ENCODE measurements at regions of chr11 and their contacts with region 1.

Region 1: DNA sequence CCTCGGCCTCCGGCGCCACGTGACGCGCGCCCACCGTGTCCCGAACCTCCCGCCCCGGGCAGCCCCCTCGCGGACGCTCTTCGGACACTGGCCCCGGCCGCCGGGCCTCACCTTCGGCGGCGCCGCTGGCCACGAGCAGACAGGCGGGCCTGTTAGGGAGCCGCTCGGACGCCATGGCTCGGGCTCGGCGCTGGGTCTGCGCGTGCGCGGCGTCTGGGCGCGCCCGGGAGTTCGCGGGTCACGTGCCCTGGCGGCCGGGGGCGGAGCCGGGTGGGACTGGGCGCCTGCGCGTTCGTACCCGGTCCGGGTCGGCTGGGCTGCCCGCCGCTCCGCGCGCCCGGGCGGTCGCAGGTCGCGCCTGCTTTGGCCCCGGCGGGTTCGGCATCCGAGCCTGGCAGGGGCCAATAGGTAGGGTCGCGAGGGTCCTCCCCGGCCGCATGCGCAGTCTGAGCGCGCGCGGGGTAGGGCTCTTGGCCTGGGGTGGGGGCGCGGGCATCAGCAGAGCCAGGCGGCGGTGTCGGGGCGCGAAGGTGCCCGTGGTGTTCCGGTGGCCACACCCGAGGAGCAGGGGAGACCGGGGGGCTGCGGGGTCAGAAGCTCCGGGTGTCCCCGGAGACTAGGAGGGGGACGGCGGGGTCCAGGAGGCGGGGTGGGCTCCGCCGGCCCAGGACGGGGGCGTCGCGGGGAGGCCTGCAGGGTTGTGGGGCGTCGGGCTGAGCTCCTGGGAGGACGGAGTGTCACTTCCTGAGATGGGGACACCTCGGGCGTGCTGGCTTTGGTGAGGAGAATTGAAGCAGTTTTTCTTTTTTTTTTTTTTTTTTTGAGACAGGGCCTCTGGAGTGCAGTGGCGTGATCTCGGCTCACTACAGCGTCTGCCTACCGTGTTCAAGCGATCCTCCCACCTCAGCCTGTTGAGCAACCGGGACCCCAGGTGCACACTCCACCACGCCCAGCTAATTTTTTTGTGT is at the start of gene GATD1:
- DNase-seq: peak; percentile 97
- ATAC-seq: peak; percentile 91
- H3K4me3 Mint-ChIP-seq: peak within 1 kb of the TSS; percentile 89
- H3K27ac Mint-ChIP-seq: peak within 1 kb of the TSS; percentile 82
- H3K4me1 Mint-ChIP-seq: peaks cover 20% of the 10 kb centered on the region
- H3K27me3 Mint-ChIP-seq: no peaks in the 10 kb centered on the region
- total RNA-seq, gene GATD1: 45.7 to 59.8 TPM

Region 2: GRCh38 chr11:747158-748006 is 30.2 kb before region 1 on chr11 and contains the start of gene TALDO1:
- CTCF ChIA-PET with region 1: interaction called, 3 read pairs
- POLR2A ChIA-PET with region 1: interaction called, 4 read pairs
- intact Hi-C with region 1: loop called in 1 of 2 experiments (anchors 1 kb)
- DNase-seq: peak; percentile 92
- ATAC-seq: peak; percentile 91
- H3K4me3 Mint-ChIP-seq: peak within 1 kb of the TSS; percentile 82
- H3K27ac Mint-ChIP-seq: peak within 1 kb of the TSS; percentile 72
- H3K4me1 Mint-ChIP-seq: peaks cover 20% of the 10 kb centered on the region
- H3K27me3 Mint-ChIP-seq: no peaks in the 10 kb centered on the region
- total RNA-seq, gene TALDO1: 239 to 246 TPM

Region 3: GRCh38 chr11:789943-790342 is 12.4 kb after region 1 on chr11 and contains the start of gene CEND1:
- CTCF ChIA-PET with region 1: interaction called, 3 read pairs
- POLR2A ChIA-PET with region 1: no interaction called
- intact Hi-C with region 1: loop called in 1 of 2 experiments (anchors 1 kb)
- DNase-seq: peak; percentile 76
- ATAC-seq: peak; percentile 64
- H3K4me3 Mint-ChIP-seq: peak within 1 kb of the TSS; percentile 28
- H3K27ac Mint-ChIP-seq: no peak within 1 kb of the TSS
- H3K4me1 Mint-ChIP-seq: peaks cover 6% of the 10 kb centered on the region
- H3K27me3 Mint-ChIP-seq: no peaks in the 10 kb centered on the region
- total RNA-seq, gene CEND1: 0.50 to 1.1 TPM

Region 4: DNA sequence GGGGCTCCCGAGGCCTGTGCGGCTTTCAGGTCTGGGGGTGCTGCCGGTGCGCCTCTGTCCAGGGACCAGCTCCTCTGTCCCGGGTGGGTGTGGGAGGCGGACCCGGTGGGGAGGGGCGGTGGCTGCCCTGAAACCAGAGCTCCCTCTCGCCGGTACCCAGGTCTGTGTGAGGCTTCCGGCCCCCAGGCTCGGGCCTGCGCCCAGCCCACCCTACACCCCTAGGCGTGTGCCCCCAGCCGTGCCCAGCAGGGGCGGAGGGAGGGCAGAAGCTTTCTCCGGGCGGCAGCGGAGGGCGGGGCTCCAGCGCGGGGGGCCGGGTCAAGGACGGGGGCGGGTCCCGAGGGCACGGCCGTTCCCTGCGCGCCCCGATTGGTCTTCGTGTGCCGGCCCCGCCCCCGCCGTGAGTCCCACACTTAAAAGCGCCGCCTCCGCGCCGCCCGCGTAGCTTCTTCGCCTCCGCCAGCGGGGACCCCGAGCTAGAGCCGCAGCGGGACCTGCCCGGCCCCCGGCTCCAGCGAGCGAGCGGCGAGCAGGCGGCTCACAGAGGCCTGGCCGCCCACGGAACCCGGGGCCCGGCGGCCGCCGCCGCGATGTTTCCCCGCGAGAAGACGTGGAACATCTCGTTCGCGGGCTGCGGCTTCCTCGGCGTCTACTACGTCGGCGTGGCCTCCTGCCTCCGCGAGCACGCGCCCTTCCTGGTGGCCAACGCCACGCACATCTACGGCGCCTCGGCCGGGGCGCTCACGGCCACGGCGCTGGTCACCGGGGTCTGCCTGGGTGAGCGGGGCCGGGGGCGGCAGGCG is 41.8 kb after region 1 on chr11:
- CTCF ChIA-PET with region 1: no interaction called
- POLR2A ChIA-PET with region 1: no interaction called
- intact Hi-C with region 1: loop called in 1 of 2 experiments (anchors 1 kb)
- DNase-seq: peak; percentile 95
- ATAC-seq: peak; percentile 82
- H3K4me3 Mint-ChIP-seq: peak overlapping the region; percentile 72
- H3K27ac Mint-ChIP-seq: no peak overlapping the region
- H3K4me1 Mint-ChIP-seq: peaks cover 11% of the 10 kb centered on the region
- H3K27me3 Mint-ChIP-seq: no peaks in the 10 kb centered on the region

Region 5: DNA sequence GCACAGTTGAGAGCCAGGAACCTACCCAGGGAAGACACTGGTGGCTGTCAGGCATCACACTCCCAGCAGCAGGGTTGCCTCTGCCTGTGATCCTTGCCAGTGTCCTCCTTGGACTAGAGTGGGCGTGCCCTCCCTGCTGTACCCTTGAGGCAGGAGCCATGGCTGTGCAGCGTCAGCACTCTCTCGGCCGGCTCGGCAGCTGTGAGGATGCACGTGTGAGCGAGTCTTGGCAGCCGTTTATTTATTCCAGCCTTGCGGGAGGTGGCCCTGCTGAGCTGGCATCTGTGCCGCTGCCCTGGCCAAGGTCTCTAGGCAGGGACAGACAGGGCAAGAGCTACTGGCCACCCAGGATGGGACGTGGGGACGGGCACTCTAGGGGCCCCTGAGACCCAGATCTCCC is 98.9 kb after region 1 on chr11:
- CTCF ChIA-PET with region 1: no interaction called
- POLR2A ChIA-PET with region 1: no interaction called
- intact Hi-C with region 1: no loop called
- DNase-seq: no peak
- ATAC-seq: no peak
- H3K4me3 Mint-ChIP-seq: no peak overlapping the region
- H3K27ac Mint-ChIP-seq: no peak overlapping the region
- H3K4me1 Mint-ChIP-seq: no peaks in the 10 kb centered on the region
- H3K27me3 Mint-ChIP-seq: no peaks in the 10 kb centered on the region

Region 6: DNA sequence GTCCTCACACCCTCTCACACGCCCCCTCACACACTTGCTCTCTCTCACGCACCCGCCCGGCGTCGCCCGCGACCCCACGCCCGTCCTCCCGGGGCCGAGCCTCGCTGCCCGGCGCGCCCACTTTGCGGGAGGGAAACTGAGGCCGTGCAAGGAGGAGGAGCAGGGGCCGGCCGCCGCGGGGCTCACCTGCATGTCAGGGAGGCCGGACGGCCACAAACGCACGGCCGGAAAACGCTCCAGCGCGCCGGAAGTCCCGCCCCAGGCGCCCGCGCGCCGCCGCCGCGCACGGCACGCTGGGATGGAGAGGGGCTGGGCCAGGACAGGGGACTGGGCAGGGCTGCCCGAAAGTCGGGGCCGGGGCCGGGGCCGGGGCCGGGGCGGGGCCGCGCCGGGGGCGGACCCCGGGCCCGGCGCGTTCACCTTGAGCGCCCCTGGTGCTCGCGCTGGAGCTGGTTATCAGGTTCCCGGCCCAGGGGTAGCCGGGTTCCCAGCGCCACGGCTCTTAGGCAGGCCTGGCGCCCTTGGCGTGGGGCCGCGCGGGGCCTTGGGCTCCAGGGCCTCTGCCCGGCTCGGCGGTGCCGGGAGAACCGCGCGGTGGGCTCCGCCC is 133.1 kb after region 1 on chr11 and contains the start of gene CHID1:
- CTCF ChIA-PET with region 1: interaction called, 3 read pairs
- POLR2A ChIA-PET with region 1: no interaction called
- intact Hi-C with region 1: loop called in 1 of 2 experiments (anchors 1 kb)
- DNase-seq: peak; percentile 92
- ATAC-seq: peak; percentile 98
- H3K4me3 Mint-ChIP-seq: peak within 1 kb of the TSS; percentile 88
- H3K27ac Mint-ChIP-seq: peak within 1 kb of the TSS; percentile 88
- H3K4me1 Mint-ChIP-seq: peaks cover 24% of the 10 kb centered on the region
- H3K27me3 Mint-ChIP-seq: no peaks in the 10 kb centered on the region
- total RNA-seq, gene CHID1: 60.4 to 75.3 TPM